GM12878 (cell line): ENCODE measurements at regions of chr3 and their contacts with region 1.

Region 1: DNA sequence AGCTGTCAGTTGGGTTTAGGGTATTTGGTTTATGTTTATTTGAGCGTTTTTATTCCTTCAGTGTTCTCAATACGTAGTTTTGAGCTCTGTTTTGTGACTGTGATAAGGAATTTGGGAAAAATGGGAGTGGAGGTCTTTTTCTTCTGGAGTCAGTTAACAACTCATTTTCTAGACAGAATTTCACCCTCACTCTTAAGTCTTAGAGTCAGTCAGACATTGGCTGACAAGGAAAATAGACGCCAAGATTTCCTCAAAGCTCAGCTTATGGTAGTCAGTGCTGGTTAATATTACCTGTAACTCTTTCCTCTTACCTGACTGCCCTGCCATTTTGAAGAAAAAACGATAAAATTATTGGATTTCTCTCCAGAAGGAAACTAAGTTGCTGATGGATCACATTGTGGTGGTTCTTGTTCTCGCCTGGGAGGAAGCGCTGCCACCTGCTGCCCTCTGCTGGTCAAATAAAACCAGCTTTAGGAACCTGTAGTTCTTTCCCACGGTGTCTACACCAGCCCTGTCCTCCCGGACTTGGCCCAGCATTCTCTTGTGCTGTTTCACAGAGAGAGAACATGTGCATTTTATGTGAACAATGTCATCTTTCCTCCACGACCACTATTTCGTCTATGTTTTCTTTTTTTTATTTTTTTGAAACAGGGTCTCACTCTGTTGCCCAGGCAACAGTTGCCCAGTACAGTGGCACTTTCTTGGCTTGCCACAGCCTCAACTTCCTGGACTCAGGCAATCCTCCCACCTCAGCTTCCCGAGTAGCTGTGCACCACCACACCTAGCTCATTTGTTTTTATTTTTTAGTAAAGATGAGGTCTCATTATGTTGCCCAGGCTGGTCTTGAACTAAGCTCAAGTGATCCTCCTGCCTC is 41.4 kb upstream of the UMPS start:
- DNase-seq: peak; percentile 30
- ATAC-seq: peak; percentile 94
- H3K4me3 ChIP-seq: no peak overlapping the region
- H3K27ac ChIP-seq: no peak overlapping the region
- H3K4me1 ChIP-seq: no peaks in the 10 kb centered on the region
- H3K27me3 ChIP-seq: no peaks in the 10 kb centered on the region
- CTCF ChIP-seq: peak; percentile 75 to 95 (median 79); a peak in 5 of 6 replicates
- EP300 ChIP-seq: no peak
- POLR2A ChIP-seq: no peak
- RAD21 ChIP-seq: peak; percentile 91

Region 2: DNA sequence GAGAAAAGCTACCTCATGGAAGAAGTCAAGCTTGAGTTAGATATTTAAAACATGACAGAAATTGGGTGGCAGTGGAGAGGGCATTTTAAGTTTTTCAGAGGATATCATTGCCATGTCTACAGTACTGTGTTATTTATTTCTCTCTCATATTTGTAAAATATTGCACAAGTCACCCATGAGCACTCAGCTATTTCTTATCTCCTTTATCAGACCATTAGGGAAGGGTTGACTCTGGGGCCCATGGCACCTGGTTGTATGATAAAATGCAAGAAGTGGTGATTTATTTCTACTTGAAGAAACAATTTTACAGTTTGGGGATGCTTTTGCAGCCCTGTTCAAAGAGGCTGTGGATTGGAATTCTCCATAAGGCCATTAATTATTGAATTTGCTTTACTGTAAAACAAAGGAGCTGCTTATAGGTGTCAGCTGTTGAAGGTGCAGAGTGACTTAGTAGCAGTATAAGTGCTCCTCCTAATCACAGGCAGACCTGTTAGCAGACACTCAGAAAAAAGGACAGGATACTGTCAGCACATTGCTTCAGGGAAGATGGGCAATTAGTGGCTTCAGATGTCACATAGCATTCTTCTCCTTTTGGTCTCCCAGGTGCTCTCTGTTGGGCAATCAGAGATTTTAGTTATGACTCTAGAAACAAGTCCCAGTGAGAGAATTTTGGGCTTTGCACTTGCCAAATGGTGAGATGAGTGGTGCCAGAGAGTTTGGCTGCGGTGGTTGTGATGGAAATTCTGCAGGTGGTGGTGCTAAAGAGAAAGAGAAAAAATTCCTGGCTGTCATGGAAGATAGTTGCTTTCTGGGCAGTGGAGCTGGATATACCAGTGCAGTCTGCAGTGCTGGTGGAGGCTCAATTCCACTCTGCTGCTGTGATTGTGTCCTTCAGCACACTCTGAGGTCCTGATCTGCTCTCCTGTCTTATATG is 567.2 kb before region 1 on chr3:
- CTCF ChIA-PET with region 1: no interaction called
- POLR2A ChIA-PET with region 1: no interaction called
- RAD21 ChIA-PET with region 1: no interaction called
- SMC1A ChIA-PET with region 1: no interaction called
- in situ Hi-C with region 1: no loop called
- intact Hi-C with region 1: no loop called
- DNase-seq: no peak
- ATAC-seq: no peak
- H3K4me3 ChIP-seq: no peak overlapping the region
- H3K27ac ChIP-seq: no peak overlapping the region
- H3K4me1 ChIP-seq: no peaks in the 10 kb centered on the region
- H3K27me3 ChIP-seq: peaks cover 2% of the 10 kb centered on the region in 2 experiments; a peak in 2 of 4 replicates
- CTCF ChIP-seq: no peak
- EP300 ChIP-seq: no peak
- POLR2A ChIP-seq: no peak
- RAD21 ChIP-seq: no peak

Region 3: DNA sequence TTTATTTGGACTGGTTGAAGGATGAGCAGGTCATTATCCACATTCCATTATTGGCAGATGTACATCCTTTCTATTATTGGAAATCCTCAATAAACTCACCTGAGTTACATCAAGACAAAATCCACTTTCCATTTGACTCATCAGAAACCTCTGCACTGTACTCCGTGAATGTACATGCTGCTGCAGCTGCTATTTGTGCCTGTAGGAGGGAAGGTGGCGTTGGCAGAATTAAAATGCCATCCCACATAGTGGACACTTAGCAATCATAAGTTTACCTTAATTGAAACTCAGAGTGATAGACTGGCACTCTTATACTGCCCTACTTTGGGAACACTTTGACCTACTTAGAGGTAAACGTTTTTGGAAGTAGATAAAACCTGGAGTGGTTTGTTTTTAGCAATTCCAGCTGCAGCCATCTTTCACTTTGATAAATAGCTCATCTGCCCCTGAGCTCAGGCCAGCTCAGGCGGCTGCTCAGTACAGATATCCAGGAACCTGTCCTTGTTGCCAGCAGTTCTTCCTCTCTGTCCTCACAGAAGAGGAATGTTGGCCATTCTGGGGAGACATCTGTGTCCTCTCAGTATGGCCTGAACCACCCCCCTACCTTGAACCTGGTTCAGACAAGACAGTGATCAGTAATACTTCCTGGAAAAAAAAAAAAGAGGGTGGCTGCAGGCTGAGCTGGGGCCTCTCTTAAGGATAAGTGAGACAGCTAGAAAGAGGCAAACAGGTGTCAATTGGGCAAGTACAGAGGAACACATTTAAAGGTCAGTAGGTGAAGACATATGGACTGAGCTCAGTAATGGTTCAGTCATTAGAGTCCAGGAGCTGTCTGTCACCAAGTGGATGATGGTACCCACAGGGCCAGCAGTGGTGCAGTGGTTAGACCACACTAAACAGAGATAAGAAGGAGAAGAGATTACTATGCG is 112.0 kb before region 1 on chr3:
- CTCF ChIA-PET with region 1: interaction called, 577 read pairs
- POLR2A ChIA-PET with region 1: no interaction called
- RAD21 ChIA-PET with region 1: interaction called, 44 read pairs
- SMC1A ChIA-PET with region 1: interaction called, 98 read pairs
- in situ Hi-C with region 1: loop called (anchors 5 kb)
- intact Hi-C with region 1: no loop called
- DNase-seq: peak; percentile 30
- ATAC-seq: peak; percentile 84
- H3K4me3 ChIP-seq: no peak overlapping the region
- H3K27ac ChIP-seq: no peak overlapping the region
- H3K4me1 ChIP-seq: peaks cover 32% of the 10 kb centered on the region
- H3K27me3 ChIP-seq: no peaks in the 10 kb centered on the region
- CTCF ChIP-seq: peak; percentile 11 to 43 (median 43); a peak in 4 of 6 replicates
- EP300 ChIP-seq: peak in 1 of 2 experiments; percentile 56; a peak in 1 of 4 replicates
- POLR2A ChIP-seq: no peak
- RAD21 ChIP-seq: peak; percentile 19; the same call in 1 of the 2 replicates

Region 4: DNA sequence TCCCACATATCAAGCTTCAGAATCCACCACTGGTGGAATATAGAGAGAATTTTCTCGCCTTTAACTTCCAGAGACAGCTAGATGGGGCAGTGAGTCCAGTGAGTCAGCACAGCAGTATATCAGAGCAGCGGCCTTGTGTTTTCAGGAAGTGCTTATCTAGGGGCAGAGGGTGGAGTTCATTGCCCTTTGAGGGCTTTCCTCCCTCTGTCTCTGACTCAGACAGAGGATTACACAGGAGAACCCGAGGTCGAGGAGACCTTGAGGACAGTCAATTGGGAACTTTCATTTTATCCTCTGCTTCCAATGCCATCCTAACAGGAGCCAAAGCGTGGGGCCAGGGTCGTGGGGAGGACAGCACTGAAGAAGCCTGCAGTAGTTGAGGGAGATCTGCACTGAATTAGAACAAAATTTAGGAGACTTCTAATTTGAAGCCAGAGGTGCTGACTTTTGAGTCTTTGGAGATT is 68.2 kb before region 1 on chr3:
- CTCF ChIA-PET with region 1: interaction called, 4 read pairs
- POLR2A ChIA-PET with region 1: interaction called, 3 read pairs
- RAD21 ChIA-PET with region 1: interaction called, 4 read pairs
- SMC1A ChIA-PET with region 1: interaction called, 10 read pairs
- in situ Hi-C with region 1: no loop called
- intact Hi-C with region 1: loop called (anchors 10 kb)
- DNase-seq: peak; percentile 38
- ATAC-seq: peak; percentile 89
- H3K4me3 ChIP-seq: 0 out of 2 replicates have a peak overlapping the region, but pooled peaks have one; percentile 19
- H3K27ac ChIP-seq: peak overlapping the region; percentile 84
- H3K4me1 ChIP-seq: peaks cover 18% of the 10 kb centered on the region
- H3K27me3 ChIP-seq: no peaks in the 10 kb centered on the region
- CTCF ChIP-seq: no peak
- EP300 ChIP-seq: no peak
- POLR2A ChIP-seq: no peak
- RAD21 ChIP-seq: no peak

Region 5: GRCh38 chr3:124650798-124651197 is 38.0 kb before region 1 on chr3:
- CTCF ChIA-PET with region 1: interaction called, 25 read pairs
- POLR2A ChIA-PET with region 1: no interaction called
- RAD21 ChIA-PET with region 1: interaction called, 30 read pairs
- SMC1A ChIA-PET with region 1: interaction called, 55 read pairs
- in situ Hi-C with region 1: no loop called
- intact Hi-C with region 1: no loop called
- DNase-seq: peak; percentile 65
- ATAC-seq: peak; percentile 89
- H3K4me3 ChIP-seq: no peak overlapping the region
- H3K27ac ChIP-seq: peak overlapping the region; percentile 49
- H3K4me1 ChIP-seq: peaks cover 31% of the 10 kb centered on the region
- H3K27me3 ChIP-seq: no peaks in the 10 kb centered on the region
- CTCF ChIP-seq: no peak
- EP300 ChIP-seq: peak; percentile 92 to 96; a peak in 3 of 4 replicates
- POLR2A ChIP-seq: no peak
- RAD21 ChIP-seq: no peak

Region 6: GRCh38 chr3:124676236-124676635 is 12.6 kb before region 1 on chr3:
- CTCF ChIA-PET with region 1: interaction called, 14 read pairs
- POLR2A ChIA-PET with region 1: no interaction called
- RAD21 ChIA-PET with region 1: interaction called, 3 read pairs
- SMC1A ChIA-PET with region 1: interaction called, 3 read pairs
- in situ Hi-C with region 1: no loop called
- intact Hi-C with region 1: no loop called
- DNase-seq: no peak
- ATAC-seq: no peak
- H3K4me3 ChIP-seq: no peak overlapping the region
- H3K27ac ChIP-seq: no peak overlapping the region
- H3K4me1 ChIP-seq: no peaks in the 10 kb centered on the region
- H3K27me3 ChIP-seq: no peaks in the 10 kb centered on the region
- CTCF ChIP-seq: no peak
- EP300 ChIP-seq: no peak
- POLR2A ChIP-seq: no peak
- RAD21 ChIP-seq: no peak

Region 7: GRCh38 chr3:124761250-124761796 is 72.5 kb after region 1 on chr3:
- CTCF ChIA-PET with region 1: interaction called, 4 read pairs
- POLR2A ChIA-PET with region 1: no interaction called
- RAD21 ChIA-PET with region 1: interaction called, 15 read pairs
- SMC1A ChIA-PET with region 1: interaction called, 4 read pairs
- in situ Hi-C with region 1: no loop called
- intact Hi-C with region 1: no loop called
- DNase-seq: peak; percentile 49
- ATAC-seq: peak; percentile 91
- H3K4me3 ChIP-seq: no peak overlapping the region
- H3K27ac ChIP-seq: no peak overlapping the region
- H3K4me1 ChIP-seq: no peaks in the 10 kb centered on the region
- H3K27me3 ChIP-seq: no peaks in the 10 kb centered on the region; a peak in 2 of 4 replicates
- CTCF ChIP-seq: peak; percentile 94 to 96 (median 94)
- EP300 ChIP-seq: no peak
- POLR2A ChIP-seq: no peak
- RAD21 ChIP-seq: peak; percentile 93